ENCODE measurements at regions of chr17 and their contacts with region 1.

Region 1: GRCh38 chr17:8204761-8205555 is 5.4 kb downstream of the AURKB start:
- DNase-seq: no peak
- H3K4me3 ChIP-seq: no peak overlapping the region
- H3K4me3 Mint-ChIP-seq: no peak overlapping the region
- H3K27ac ChIP-seq: no peak overlapping the region
- H3K27ac Mint-ChIP-seq: peak overlapping the region in 1 of 7 donors; percentile 70
- H3K4me1 ChIP-seq: peaks cover 18 to 22% of the 10 kb centered on the region in 2 donors
- H3K4me1 Mint-ChIP-seq: peaks cover 18% of the 10 kb centered on the region
- H3K27me3 ChIP-seq: no peaks in the 10 kb centered on the region
- H3K27me3 Mint-ChIP-seq: no peaks in the 10 kb centered on the region
- CTCF ChIP-seq: no peak

Region 2: DNA sequence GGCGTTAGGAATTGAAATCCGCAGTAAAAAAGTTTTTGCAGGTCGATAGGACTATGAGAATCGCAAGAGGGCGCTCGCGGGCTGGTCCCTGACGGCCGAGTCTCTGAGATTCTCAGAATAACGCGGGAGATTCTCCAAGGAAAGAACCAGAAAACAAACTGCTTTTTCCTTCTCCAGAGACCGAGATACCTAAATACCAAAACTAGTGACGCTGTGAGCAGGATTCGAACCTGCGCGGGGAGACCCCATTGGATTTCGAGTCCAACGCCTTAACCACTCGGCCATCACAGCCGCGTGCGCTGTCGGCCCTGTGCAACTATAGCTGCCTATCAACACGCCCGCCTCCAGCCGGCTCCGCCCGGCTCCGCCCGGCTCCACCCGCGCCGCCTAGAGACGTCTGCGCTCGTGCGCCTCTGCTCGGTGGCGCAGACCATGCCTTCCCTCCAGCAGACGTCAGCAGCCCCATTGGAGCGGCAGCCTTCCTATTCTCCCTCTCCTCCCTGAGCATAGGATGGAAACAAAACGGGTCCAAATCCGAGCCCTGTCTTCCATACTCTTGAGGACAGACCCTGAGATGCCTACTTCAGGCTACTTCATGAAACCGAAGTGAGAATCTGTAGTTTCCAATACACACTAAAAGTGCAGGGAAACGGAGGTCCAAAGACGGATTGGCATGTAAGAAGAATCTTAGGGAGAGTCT is 66.1 kb before region 1 on chr17:
- intact Hi-C with region 1: no loop called
- DNase-seq: peak; percentile 88 to 93 (median 90)
- H3K4me3 ChIP-seq: peak overlapping the region; percentile 4 to 68 (median 21)
- H3K4me3 Mint-ChIP-seq: no peak overlapping the region
- H3K27ac ChIP-seq: peak overlapping the region; percentile 55 to 58
- H3K27ac Mint-ChIP-seq: no peak overlapping the region
- H3K4me1 ChIP-seq: peaks cover 34 to 40% of the 10 kb centered on the region in 2 donors
- H3K4me1 Mint-ChIP-seq: no peaks in the 10 kb centered on the region
- H3K27me3 ChIP-seq: peaks cover 0 to 10% of the 10 kb centered on the region in 2 donors
- H3K27me3 Mint-ChIP-seq: peaks cover 6 to 18% (median 11%) of the 10 kb centered on the region in 3 donors
- CTCF ChIP-seq: peak; percentile 94

Region 3: DNA sequence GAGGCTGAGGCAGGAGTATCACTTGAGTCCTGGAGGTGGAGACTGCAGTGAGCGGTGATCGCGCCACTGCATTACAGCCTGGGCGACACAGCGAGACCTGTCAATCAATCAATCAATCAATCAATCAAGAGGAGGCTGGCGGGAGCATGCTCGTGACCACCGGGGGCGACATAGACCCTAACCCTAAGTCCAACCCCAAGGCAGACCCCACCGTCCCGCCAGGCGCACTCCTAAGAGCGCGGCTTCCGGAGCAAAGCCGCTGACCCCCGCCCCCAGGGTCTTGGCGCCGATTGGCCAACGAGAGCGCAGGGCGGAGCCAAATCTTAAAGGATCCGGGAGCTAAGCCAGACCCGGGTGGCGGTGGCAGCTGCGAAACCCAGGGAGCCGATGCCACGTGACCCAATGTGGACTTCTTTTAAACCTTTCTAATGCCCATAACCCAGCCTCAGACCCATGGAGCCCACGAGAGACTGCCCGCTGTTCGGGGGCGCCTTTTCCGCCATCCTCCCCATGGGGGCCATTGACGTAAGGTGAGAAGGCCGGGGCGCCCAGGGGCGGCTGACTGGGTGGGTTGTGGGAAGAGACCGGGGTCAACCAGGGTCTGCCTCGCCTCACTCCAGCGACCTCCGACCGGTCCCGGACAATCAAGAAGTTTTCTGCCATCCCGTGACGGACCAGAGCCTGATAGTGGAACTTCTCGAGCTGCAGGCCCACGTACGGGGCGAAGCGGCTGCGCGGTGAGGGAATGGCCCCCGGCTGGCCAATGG is 83.6 kb after region 1 on chr17 and contains the start of gene RANGRF:
- intact Hi-C with region 1: loop called in 1 of 2 experiments (anchors 5 kb)
- DNase-seq: peak; percentile 72 to 81 (median 75)
- H3K4me3 ChIP-seq: peak within 1 kb of the TSS; percentile 76 to 90 (median 84)
- H3K4me3 Mint-ChIP-seq: peak within 1 kb of the TSS; percentile 93 to 96
- H3K27ac ChIP-seq: peak within 1 kb of the TSS; percentile 77 to 84
- H3K27ac Mint-ChIP-seq: peak within 1 kb of the TSS; percentile 89 to 97 (median 95)
- H3K4me1 ChIP-seq: peaks cover 31 to 44% of the 10 kb centered on the region in 2 donors
- H3K4me1 Mint-ChIP-seq: peaks cover 47% of the 10 kb centered on the region
- H3K27me3 ChIP-seq: no peaks in the 10 kb centered on the region
- H3K27me3 Mint-ChIP-seq: peaks cover 0 to 1% (median 0%) of the 10 kb centered on the region in 3 donors
- CTCF ChIP-seq: no peak
- polyA plus RNA-seq, gene RANGRF: 27.3 to 34.3 (median 31.7) TPM

Region 4: DNA sequence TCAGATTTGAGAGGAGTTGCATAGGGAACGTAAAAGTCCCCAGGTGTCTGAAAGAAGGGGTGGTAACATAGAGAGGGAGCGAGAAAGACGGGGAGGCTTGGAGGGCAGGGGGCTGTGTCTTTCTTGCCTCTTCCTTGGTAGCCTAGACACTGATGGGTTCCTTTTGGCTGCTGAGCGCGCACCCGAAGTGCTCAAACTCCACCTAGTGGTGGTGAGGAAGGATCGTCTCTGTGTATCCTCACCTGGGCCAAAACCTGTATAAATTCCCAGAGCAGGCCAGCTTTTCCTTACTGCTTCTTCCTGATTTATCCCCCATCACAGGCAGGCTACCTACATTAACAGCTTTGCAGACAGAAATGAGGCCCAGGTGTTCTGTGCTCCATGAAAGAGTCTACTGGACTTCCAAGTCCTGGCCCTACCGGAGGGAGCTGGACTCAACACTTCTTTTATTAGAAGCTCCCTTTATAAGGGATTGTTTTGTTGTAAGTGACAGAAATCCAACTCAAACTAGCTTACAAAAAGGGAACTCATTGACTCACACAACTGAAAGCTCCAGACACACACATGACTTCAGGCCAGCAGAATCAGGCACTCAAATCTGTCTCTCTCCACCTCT is 95.8 kb after region 1 on chr17:
- intact Hi-C with region 1: no loop called
- DNase-seq: peak; percentile 59 to 75 (median 69)
- H3K4me3 ChIP-seq: no peak overlapping the region
- H3K4me3 Mint-ChIP-seq: no peak overlapping the region
- H3K27ac ChIP-seq: no peak overlapping the region
- H3K27ac Mint-ChIP-seq: no peak overlapping the region
- H3K4me1 ChIP-seq: peaks cover 12% of the 10 kb centered on the region in 2 donors
- H3K4me1 Mint-ChIP-seq: peaks cover 17% of the 10 kb centered on the region
- H3K27me3 ChIP-seq: no peaks in the 10 kb centered on the region
- H3K27me3 Mint-ChIP-seq: peaks cover 0 to 3% (median 0%) of the 10 kb centered on the region in 3 donors
- CTCF ChIP-seq: peak; percentile 88

Measured in CD14-positive monocyte (primary cell).